ENCODE measurements at regions of chr18 and their contacts with region 1.

Region 1: DNA sequence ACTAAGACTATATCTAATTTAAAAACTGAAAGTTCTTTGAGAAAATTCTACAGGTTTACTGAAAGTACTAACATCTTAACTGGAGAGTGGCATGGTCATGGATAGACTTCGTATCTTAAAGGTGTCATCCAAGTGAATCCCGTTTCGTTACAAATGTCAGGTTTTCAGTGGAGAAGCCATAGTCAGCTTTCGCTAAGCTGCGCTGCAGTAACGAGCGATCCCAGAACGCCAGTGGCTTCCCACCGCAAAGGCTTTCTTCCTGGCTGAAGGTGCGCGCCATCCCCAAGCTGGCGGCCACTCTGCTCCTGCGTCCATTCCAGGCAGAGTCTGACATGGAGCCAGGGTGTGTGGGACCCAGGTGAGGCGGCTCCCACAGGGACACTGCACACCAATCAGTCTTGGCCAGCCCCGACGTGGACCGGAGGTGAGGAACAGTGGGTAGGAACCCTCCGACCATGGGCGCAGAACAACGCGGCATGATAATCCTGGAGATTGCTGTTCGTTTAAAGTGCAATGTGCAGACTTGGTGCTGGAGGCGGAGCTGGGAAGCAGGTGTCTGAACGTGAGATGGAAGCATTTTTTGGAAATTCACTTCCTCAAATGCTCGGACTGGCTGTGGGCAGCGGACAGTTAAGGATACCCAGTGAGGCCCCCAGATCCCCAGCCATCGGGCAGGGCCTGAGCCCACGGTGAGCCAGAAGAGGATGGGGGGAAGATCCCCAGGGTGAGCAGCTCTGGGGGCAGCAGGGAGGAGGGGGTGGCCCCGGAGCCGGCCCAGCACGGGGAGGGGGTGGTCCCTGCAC is 27.8 kb upstream of the KCNG2 start:
- DNase-seq: no peak
- H3K4me3 ChIP-seq: no peak overlapping the region
- H3K27ac ChIP-seq: no peak overlapping the region
- H3K4me1 ChIP-seq: no peaks in the 10 kb centered on the region
- H3K27me3 ChIP-seq: no peaks in the 10 kb centered on the region
- CTCF ChIP-seq: no peak
- POLR2A ChIP-seq: no peak

Region 2: DNA sequence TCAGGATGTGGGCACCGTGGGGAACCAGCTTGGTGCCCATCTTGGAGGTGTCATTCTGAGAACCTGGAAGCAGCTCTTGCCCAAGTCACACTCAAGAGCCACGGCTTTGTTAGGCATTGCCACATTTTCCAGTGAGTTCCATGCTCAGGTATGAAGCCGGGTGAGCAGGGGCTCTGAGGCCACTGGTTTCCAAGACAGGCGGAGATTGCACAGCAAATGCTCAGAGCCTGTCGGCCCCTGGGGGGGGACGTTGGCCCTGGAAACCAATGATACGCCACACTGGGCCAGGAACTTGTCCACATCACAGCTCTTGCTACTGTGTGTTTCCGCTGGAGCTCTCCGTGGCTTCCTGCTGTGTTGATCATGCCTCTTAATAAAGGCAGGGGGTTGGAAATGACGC is 842.7 kb before region 1 on chr18:
- intact Hi-C with region 1: loop called (anchors 10 kb)
- DNase-seq: no peak
- H3K4me3 ChIP-seq: no peak overlapping the region
- H3K27ac ChIP-seq: no peak overlapping the region
- H3K4me1 ChIP-seq: no peaks in the 10 kb centered on the region
- H3K27me3 ChIP-seq: no peaks in the 10 kb centered on the region
- CTCF ChIP-seq: no peak
- POLR2A ChIP-seq: no peak

Region 3: GRCh38 chr18:80012714-80013113 is 242.8 kb after region 1 on chr18:
- intact Hi-C with region 1: no loop called
- DNase-seq: no peak
- H3K4me3 ChIP-seq: no peak overlapping the region
- H3K27ac ChIP-seq: no peak overlapping the region
- H3K4me1 ChIP-seq: no peaks in the 10 kb centered on the region
- H3K27me3 ChIP-seq: no peaks in the 10 kb centered on the region
- CTCF ChIP-seq: no peak
- POLR2A ChIP-seq: no peak

Region 4: DNA sequence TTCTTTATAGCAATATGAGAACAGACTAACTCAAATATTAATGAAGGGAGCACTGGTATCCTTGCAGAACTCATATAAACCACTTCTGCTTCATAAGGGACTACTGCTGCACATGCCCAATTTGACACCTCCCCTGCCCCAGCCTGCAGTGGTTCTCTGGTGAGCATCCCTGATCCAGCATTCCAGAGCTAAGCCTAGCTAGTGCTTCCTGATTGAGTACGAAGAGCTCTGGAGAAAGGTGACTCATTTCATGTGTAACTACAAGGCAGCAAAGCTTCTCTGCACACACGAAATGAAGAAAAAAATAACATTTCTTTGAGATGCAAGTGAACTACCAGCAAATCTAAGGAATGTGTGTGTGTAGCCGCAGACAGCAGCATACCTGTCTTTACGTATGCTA is 316.4 kb after region 1 on chr18:
- intact Hi-C with region 1: no loop called
- DNase-seq: no peak
- H3K4me3 ChIP-seq: no peak overlapping the region
- H3K27ac ChIP-seq: no peak overlapping the region
- H3K4me1 ChIP-seq: no peaks in the 10 kb centered on the region
- H3K27me3 ChIP-seq: no peaks in the 10 kb centered on the region
- CTCF ChIP-seq: no peak
- POLR2A ChIP-seq: no peak